PC-9 (cell line): ENCODE measurements at regions of chrX and their contacts with region 1.

Region 1: GRCh38 chrX:153794018-153794896 is at the starts of genes IDH3G and SSR4:
- DNase-seq: peak; percentile 86 to 97
- H3K4me3 ChIP-seq: peak within 1 kb of the TSS; percentile 93
- H3K27ac ChIP-seq: peak within 1 kb of the TSS; percentile 58
- H3K4me1 ChIP-seq: peaks cover 15% of the 10 kb centered on the region; the same call in 1 of the 2 replicates
- H3K27me3 ChIP-seq: no peaks in the 10 kb centered on the region
- CTCF ChIP-seq: no peak; the same call in 1 of the 2 replicates
- total RNA-seq, gene IDH3G: 47.7 and 63.4 TPM in 2 replicates
- total RNA-seq, gene SSR4: 223 and 310 TPM in 2 replicates

Region 2: DNA sequence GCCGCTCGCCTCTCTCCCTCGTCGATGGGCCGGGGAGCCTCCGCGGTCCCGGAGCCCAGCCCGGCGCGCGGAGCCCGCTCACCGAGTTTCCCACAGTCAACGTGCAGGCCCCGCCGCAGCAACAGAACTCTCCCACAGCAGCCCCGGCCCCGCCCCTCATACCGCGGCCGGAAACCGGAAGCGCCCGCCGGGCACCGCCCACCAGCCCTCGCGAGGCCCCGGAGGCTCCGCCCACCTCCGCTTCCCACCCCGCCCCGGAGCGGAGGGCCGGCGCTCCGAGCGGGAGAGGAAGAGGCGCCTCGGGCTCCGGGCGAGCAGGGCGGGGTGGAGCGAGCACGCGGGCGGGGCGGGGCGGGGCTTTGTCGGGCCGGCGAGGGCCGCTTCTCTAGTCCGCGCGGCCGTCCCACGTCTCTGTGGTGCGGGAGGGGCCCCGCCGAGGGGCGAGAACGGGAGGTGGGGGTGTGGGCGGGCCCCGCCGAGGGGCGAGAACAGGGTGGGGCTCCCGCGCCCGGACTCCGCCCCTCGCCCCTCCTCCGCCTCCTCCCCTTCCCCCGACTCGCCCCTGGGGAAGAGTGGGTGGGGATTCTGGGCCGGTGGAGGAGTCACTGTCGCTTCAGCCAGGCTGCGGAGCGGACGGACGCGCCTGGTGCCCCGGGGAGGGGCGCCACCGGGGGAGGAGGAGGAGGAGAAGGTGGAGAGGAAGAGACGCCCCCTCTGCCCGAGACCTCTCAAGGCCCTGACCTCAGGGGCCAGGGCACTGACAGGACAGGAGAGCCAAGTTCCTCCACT is 69.8 kb before region 1 on chrX and contains the starts of genes ABCD1 and BCAP31:
- CTCF ChIA-PET with region 1: no interaction called
- POLR2A ChIA-PET with region 1: no interaction called
- intact Hi-C with region 1: loop called (anchors 2 kb)
- DNase-seq: peak; percentile 76 to 97
- H3K4me3 ChIP-seq: peak within 1 kb of the TSS; percentile 85
- H3K27ac ChIP-seq: peak within 1 kb of the TSS; percentile 91
- H3K4me1 ChIP-seq: peaks cover 34% of the 10 kb centered on the region
- H3K27me3 ChIP-seq: no peaks in the 10 kb centered on the region
- CTCF ChIP-seq: no peak
- total RNA-seq, gene ABCD1: 40.0 and 44.9 TPM in 2 replicates
- total RNA-seq, gene BCAP31: 522 and 541 TPM in 2 replicates

Region 3: DNA sequence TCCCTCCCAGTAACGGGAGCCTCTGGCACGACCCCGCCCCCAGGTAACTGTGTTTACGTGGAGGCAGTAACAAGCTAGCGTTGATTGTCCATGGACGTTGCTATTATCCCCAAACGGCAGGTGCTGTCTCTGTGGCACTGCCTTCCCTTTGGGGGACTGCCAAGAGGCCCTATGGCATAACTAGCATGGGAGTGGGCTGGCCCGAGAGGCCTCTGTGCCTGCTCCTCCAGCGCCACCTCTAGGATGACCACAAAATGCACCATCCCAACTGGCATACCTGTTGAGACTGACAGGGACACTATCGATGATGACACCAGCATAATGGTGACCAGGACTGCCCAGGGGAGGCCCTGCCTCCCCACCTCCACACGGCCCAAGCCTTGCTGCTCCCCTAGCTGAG is 11.9 kb before region 1 on chrX:
- CTCF ChIA-PET with region 1: no interaction called
- POLR2A ChIA-PET with region 1: no interaction called
- intact Hi-C with region 1: no loop called
- DNase-seq: no peak
- H3K4me3 ChIP-seq: no peak overlapping the region
- H3K27ac ChIP-seq: no peak overlapping the region
- H3K4me1 ChIP-seq: no peaks in the 10 kb centered on the region
- H3K27me3 ChIP-seq: no peaks in the 10 kb centered on the region
- CTCF ChIP-seq: no peak

Region 4: DNA sequence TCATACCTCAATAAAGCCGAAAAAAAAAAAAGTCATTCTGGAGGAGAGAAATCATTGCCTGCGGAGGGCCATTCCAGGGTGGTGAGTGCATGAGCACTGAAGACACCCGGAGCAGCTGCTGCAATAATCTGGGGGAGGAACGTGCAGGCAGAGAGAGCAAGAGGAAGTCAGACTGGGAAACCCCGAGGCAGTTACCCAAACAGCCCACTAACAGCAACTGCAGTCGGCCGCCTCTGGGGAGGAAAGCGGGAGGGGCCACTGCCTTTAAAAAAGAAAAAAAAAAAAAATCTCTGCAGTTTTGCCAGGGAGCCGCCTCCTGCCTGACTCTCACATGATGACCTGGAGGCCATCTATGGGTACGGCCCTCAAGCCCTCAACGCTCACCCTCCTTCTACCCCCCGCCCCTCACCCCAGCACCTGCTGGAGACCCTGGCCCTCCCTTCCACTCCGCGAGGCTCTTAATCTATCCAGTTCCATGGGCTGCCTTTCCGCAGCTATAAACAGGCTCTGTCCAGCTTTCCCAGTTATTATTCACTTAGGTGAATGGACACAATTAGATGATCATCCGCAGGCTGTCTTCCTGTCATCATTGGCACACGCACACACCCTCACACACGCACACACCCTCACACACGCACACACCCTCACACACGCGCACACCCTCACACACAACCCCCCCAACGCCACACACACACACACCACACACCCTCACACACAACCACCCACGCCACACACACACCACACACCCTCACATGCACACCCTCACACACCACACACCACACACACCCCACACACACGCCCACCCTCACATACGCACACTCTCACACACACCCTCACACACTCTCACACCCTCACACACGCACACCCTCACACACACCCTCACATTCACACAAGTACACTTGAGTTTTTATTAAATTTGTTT is 106.8 kb after region 1 on chrX:
- CTCF ChIA-PET with region 1: no interaction called
- POLR2A ChIA-PET with region 1: no interaction called
- intact Hi-C with region 1: loop called (anchors 2 kb)
- DNase-seq: peak; percentile 79 to 83
- H3K4me3 ChIP-seq: no peak overlapping the region
- H3K27ac ChIP-seq: 0 out of 2 replicates have a peak overlapping the region, but pooled peaks have one; percentile 16
- H3K4me1 ChIP-seq: peaks cover 25% of the 10 kb centered on the region
- H3K27me3 ChIP-seq: no peaks in the 10 kb centered on the region
- CTCF ChIP-seq: no peak

Region 5: GRCh38 chrX:153927922-153928760 is 133.9 kb after region 1 on chrX:
- CTCF ChIA-PET with region 1: no interaction called
- POLR2A ChIA-PET with region 1: interaction called, 4 read pairs
- intact Hi-C with region 1: loop called (anchors 1 kb)
- DNase-seq: peak; percentile 92 to 99
- H3K4me3 ChIP-seq: peak overlapping the region; percentile 86
- H3K27ac ChIP-seq: peak overlapping the region; percentile 86
- H3K4me1 ChIP-seq: peaks cover 17% of the 10 kb centered on the region; the same call in 1 of the 2 replicates
- H3K27me3 ChIP-seq: no peaks in the 10 kb centered on the region
- CTCF ChIP-seq: no peak; the same call in 1 of the 2 replicates

Region 6: DNA sequence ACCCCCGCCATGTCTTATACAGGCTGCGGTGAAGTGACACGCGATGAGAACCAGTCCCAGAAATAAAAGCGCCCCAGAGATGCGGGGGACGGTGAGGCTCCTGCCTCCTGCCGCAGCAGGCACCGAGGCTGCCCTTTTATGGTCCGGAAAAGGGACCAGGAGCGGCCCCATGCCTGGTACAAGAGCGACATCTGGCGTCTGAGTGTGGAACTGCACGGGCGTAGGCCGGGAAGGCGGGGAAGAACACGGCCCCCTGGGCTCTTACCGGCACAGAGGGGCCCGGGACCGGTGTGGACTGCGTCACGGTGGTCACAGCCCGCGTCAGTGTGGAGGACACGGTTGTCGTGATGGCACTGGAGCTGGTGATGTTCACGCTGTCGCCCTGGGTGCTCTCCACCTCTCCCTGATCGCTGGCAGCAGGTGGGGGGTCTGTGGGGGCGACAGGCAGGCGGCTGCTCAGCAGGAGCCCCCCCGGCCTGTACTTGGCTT is 159.1 kb after region 1 on chrX:
- CTCF ChIA-PET with region 1: no interaction called
- POLR2A ChIA-PET with region 1: no interaction called
- intact Hi-C with region 1: no loop called
- DNase-seq: peak in 1 of 2 experiments; percentile 70
- H3K4me3 ChIP-seq: no peak overlapping the region
- H3K27ac ChIP-seq: no peak overlapping the region
- H3K4me1 ChIP-seq: no peaks in the 10 kb centered on the region
- H3K27me3 ChIP-seq: no peaks in the 10 kb centered on the region
- CTCF ChIP-seq: peak; percentile 95